IMR-90 (cell line): ENCODE measurements at regions of chr14 and their contacts with region 1.

Region 1: DNA sequence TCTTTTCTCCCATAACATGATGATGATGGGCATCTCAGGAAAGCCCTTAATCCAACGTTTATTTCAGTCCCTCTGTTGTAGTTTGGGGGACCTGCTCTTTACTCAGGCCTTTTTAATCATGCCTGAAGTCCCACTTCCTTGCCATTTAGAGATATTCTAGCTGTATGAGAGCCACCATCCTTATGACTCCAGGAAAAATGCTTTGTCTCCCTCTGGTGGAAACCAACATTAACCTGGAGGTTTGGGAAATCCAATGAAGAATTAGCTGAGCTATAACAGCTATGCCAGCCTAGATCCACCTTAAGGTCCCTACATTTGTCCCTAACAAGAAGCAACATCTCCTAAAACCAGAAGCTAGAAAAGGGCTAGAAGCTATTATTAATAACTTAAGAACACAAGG is 1399.1 kb downstream of the LRFN5 start:
- DNase-seq: peak; percentile 23
- ATAC-seq: no peak
- H3K4me3 ChIP-seq: no peak overlapping the region
- H3K27ac ChIP-seq: no peak overlapping the region
- H3K4me1 ChIP-seq: no peaks in the 10 kb centered on the region
- H3K27me3 ChIP-seq: no peaks in the 10 kb centered on the region
- CTCF ChIP-seq: peak; percentile 42
- POLR2A ChIP-seq: no peak
- RAD21 ChIP-seq: peak; percentile 57

Region 2: DNA sequence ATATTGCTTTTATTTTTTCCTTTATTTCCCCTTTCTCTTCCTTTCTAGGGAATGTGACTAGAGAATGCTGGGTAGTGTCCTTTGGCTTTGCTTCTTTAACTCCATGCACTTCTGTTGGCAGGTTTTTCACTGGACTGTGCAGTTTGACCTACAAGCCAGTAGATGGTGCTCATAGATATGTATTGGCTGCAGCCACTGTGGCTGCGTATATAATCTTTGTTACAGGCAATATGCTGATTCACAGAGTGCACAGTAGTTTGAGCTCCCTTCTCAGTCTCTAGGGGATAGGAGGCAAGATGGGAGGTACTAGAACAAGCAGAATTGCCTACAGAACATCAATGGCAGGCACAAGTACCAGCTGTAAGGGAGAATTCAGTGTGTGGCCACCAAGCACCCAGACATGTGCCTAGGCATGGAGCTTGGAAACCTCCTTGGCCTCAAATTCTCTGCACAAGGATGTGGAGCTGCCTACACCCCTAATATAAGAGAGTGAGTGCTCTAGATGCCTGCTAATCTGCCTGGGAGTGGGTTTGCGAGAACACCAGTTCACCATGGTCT is 895.6 kb before region 1 on chr14:
- CTCF ChIA-PET with region 1: no interaction called
- POLR2A ChIA-PET with region 1: no interaction called
- dilution Hi-C with region 1: no loop called
- in situ Hi-C with region 1: loop called (anchors 25 kb)
- intact Hi-C with region 1: loop called (anchors 5 kb)
- DNase-seq: peak; percentile 71
- ATAC-seq: peak; percentile 98
- H3K4me3 ChIP-seq: no peak overlapping the region
- H3K27ac ChIP-seq: no peak overlapping the region
- H3K4me1 ChIP-seq: no peaks in the 10 kb centered on the region; the same call in 1 of the 2 replicates
- H3K27me3 ChIP-seq: no peaks in the 10 kb centered on the region
- CTCF ChIP-seq: peak; percentile 82
- POLR2A ChIP-seq: 0 out of 2 replicates have a peak, but pooled peaks have one; percentile 50
- RAD21 ChIP-seq: peak; percentile 96

Region 3: GRCh38 chr14:43042396-43042795 is 36.6 kb after region 1 on chr14:
- CTCF ChIA-PET with region 1: no interaction called
- POLR2A ChIA-PET with region 1: no interaction called
- dilution Hi-C with region 1: no loop called
- in situ Hi-C with region 1: no loop called
- intact Hi-C with region 1: no loop called
- DNase-seq: no peak
- ATAC-seq: no peak
- H3K4me3 ChIP-seq: no peak overlapping the region
- H3K27ac ChIP-seq: no peak overlapping the region
- H3K4me1 ChIP-seq: no peaks in the 10 kb centered on the region
- H3K27me3 ChIP-seq: no peaks in the 10 kb centered on the region
- CTCF ChIP-seq: no peak
- POLR2A ChIP-seq: no peak
- RAD21 ChIP-seq: no peak

Region 4: DNA sequence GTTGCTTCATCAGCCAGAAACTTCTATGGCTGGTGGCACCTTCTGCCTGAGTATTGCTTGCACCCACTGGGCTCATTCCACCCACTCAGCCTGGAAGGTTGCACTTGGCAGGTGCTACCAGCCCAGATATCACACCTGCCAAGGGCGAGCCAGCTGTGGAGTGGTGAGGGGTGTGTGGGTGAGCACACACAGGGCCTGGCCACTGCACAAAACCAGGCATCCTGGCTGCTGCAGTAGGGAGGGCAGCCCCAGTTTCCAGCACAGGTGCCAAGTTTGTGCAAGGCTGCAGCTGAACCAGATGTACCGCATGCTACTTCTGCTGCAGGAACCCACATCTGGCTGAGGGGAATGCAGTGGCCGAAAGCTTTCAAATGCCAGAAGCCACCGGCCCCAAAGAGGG is 353.5 kb after region 1 on chr14:
- CTCF ChIA-PET with region 1: no interaction called
- POLR2A ChIA-PET with region 1: no interaction called
- dilution Hi-C with region 1: no loop called
- in situ Hi-C with region 1: no loop called
- intact Hi-C with region 1: no loop called
- DNase-seq: no peak
- ATAC-seq: no peak
- H3K4me3 ChIP-seq: no peak overlapping the region
- H3K27ac ChIP-seq: no peak overlapping the region
- H3K4me1 ChIP-seq: no peaks in the 10 kb centered on the region
- H3K27me3 ChIP-seq: no peaks in the 10 kb centered on the region
- CTCF ChIP-seq: no peak
- POLR2A ChIP-seq: no peak
- RAD21 ChIP-seq: no peak